K562 (cell line): ENCODE measurements at regions of chr12 and their contacts with region 1.

Region 1: DNA sequence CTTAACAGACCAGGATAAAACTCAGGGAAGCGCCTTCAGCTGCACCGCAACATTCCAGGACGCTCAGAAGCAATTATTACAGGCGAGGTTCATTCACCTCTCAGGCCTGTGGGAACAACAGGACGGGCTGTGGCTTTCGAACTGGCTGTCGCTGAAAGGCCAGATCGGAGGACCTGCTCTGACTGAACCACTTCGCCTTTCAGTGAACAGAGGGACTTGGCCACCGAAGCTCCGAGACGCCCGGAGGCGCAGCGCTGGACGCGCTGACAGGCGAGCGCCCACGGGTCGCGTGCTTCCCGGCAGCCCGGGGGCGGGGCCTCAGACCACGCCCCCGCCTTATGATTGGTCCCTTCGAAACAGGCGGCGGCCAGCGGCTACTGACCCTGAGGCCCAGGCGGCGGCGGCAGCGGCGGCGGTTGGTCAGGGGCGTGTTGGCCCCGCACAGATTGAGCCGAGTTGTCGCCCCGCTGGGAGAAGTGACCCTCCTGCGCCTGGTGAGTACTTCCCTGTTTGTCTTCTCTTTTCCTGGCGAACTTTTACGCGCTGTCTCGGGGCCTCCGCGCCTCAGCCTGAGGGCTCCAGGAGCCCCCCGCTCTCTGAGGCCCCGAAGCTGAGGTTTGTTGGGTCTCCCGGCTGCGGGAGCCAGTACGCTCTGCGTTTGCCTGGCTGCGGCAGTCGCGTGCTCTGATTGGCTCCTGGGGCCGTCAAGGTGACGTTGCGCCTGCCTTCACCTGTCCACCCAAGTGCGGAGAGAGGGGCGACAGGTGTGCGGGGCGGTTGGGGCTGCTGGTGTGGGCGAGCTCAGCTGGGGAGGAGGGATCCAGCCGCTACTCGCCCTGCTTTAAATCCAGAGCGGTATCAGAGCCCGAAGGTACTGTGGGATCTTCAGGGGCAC is at the start of gene GAS2L3:
- DNase-seq: peak; percentile 84 to 88 (median 85)
- ATAC-seq: peak; percentile 97
- H3K4me3 ChIP-seq: peak within 1 kb of the TSS; percentile 54
- H3K27ac ChIP-seq: peak within 1 kb of the TSS; percentile 64
- H3K4me1 ChIP-seq: peaks cover 0 to 10% of the 10 kb centered on the region in 2 experiments; a peak in 3 of 5 replicates
- H3K27me3 ChIP-seq: no peaks in the 10 kb centered on the region
- CTCF ChIP-seq: no peak
- EP300 ChIP-seq: no peak; the same call in 1 of the 2 replicates
- POLR2A ChIP-seq: peak; percentile 51
- RAD21 ChIP-seq: no peak
- polyA plus RNA-seq, gene GAS2L3: 1.6 to 2.2 TPM

Region 2: GRCh38 chr12:100229058-100229637 is 344.4 kb before region 1 on chr12:
- CTCF ChIA-PET with region 1: no interaction called
- POLR2A ChIA-PET with region 1: no interaction called
- in situ Hi-C with region 1: no loop called
- intact Hi-C with region 1: no loop called
- DNase-seq: peak in 2 of 4 experiments; percentile 40 to 64
- ATAC-seq: peak; percentile 91
- H3K4me3 ChIP-seq: no peak overlapping the region
- H3K27ac ChIP-seq: no peak overlapping the region
- H3K4me1 ChIP-seq: no peaks in the 10 kb centered on the region
- H3K27me3 ChIP-seq: no peaks in the 10 kb centered on the region
- CTCF ChIP-seq: peak; percentile 50 to 61 (median 50)
- EP300 ChIP-seq: no peak
- POLR2A ChIP-seq: no peak
- RAD21 ChIP-seq: peak; percentile 36 to 67; a peak in 3 of 4 replicates

Region 3: GRCh38 chr12:100248886-100249285 is 324.7 kb before region 1 on chr12:
- CTCF ChIA-PET with region 1: no interaction called
- POLR2A ChIA-PET with region 1: no interaction called
- in situ Hi-C with region 1: loop called (anchors 10 kb)
- intact Hi-C with region 1: no loop called
- DNase-seq: no peak
- ATAC-seq: no peak
- H3K4me3 ChIP-seq: no peak overlapping the region
- H3K27ac ChIP-seq: no peak overlapping the region
- H3K4me1 ChIP-seq: no peaks in the 10 kb centered on the region
- H3K27me3 ChIP-seq: no peaks in the 10 kb centered on the region
- CTCF ChIP-seq: no peak
- EP300 ChIP-seq: no peak
- POLR2A ChIP-seq: no peak
- RAD21 ChIP-seq: no peak

Region 4: DNA sequence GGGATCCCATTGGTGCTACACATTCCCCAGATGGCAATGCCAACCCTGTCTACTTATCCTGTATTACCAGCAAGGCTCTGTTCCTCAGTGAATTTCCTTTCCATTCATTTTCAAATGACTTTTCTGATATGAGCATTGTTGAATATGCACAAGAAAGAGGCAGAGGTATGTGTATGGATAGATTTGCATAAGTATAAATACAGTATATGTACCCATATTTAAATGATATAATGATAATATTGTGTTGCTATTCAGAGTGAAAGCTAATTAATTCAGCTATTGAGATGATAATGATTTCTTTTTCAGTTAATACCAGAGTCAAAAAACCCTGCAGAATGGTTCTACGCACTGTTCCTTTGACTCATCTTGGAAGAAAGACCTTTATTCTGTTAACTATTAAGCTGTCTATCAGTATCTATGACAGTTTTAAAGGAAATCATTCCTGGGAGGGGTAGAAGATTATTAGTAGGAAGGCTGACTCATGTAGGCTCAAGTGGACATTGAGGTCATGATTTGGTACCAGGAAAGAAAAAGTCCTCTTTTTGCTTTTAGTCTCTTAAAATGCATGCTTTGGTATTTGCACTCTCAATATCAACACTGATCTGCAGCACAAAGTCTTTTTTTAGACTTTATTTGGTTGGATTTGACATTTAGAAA is 44.9 kb before region 1 on chr12:
- CTCF ChIA-PET with region 1: no interaction called
- POLR2A ChIA-PET with region 1: no interaction called
- in situ Hi-C with region 1: no loop called
- intact Hi-C with region 1: no loop called
- DNase-seq: no peak
- ATAC-seq: no peak
- H3K4me3 ChIP-seq: no peak overlapping the region
- H3K27ac ChIP-seq: no peak overlapping the region
- H3K4me1 ChIP-seq: no peaks in the 10 kb centered on the region
- H3K27me3 ChIP-seq: no peaks in the 10 kb centered on the region; a peak in 2 of 5 replicates
- CTCF ChIP-seq: no peak
- EP300 ChIP-seq: no peak
- POLR2A ChIP-seq: no peak
- RAD21 ChIP-seq: no peak

Region 5: DNA sequence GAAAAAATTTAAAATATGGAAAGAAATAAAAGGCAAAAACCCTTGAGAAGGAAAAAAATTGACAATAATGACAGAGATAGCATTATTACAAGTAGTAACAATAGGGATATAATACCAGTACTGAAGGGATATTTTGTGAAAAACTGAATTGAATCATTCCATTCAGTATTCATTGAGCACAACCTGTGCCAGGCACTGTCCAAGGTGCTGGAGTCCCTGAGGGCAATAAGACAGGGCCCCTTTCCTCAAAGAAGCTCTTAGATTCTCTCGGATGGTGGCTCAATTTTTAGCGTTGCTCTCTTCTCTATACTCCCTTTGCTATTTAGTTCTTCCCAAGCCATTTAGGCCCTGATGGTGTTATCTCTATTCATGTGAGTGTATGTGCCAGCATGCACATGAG is 34.3 kb before region 1 on chr12:
- CTCF ChIA-PET with region 1: no interaction called
- POLR2A ChIA-PET with region 1: no interaction called
- in situ Hi-C with region 1: no loop called
- intact Hi-C with region 1: no loop called
- DNase-seq: peak in 2 of 4 experiments; percentile 10 to 32
- ATAC-seq: peak; percentile 59; the same call in 2 of the 3 replicates
- H3K4me3 ChIP-seq: no peak overlapping the region
- H3K27ac ChIP-seq: no peak overlapping the region
- H3K4me1 ChIP-seq: no peaks in the 10 kb centered on the region
- H3K27me3 ChIP-seq: no peaks in the 10 kb centered on the region; a peak in 1 of 5 replicates
- CTCF ChIP-seq: no peak
- EP300 ChIP-seq: no peak
- POLR2A ChIP-seq: no peak
- RAD21 ChIP-seq: no peak